Motor neuron (in vitro differentiated cells): ENCODE measurements at regions of chr7 and their contacts with region 1.

Region 1: GRCh38 chr7:26864309-26865093 is at the start of gene SKAP2:
- ATAC-seq: peak; percentile 89 to 95 (median 94)
- H3K4me3 ChIP-seq: peak within 1 kb of the TSS; percentile 57 to 72 (median 69)
- H3K27ac ChIP-seq: peak within 1 kb of the TSS; percentile 84 to 87
- H3K4me1 ChIP-seq: peaks cover 7 to 37% of the 10 kb centered on the region in 2 donors
- total RNA-seq, gene SKAP2: 34.0 to 91.7 (median 49.4) TPM

Region 2: DNA sequence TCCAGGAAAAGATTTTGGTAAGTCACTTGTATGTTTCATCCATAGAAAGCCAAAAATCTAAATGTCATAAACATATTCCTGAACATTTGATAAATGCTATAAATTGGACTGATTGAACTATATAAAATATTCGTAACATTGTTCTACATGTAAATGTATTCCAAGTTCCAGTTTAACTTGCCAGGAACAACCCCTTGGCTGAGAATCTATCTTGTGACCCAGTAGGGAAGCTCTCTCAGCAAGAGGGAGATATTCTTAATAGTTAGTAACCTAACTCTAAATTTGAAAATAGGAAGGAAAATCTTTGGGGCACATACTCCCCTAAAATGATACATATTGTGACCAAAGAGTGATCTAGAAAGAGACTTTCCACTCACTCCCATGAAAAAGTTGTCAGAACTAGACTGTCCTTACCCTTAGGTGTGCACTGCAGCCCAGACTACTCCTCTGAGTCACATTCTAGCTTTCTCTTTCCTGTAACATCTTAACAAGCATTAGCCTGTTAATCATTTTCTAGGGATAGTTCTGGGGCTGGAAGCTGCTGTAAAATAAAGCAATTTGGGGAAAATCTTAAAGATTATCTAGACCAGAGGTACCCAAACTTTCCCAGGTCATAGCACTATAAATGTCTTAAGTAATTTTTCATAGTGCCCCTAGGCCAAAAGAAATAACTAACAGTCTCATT is 73.6 kb after region 1 on chr7:
- in situ Hi-C with region 1: no loop called
- ATAC-seq: peak in 3 of 8 experiments; percentile 23 to 35 (median 31)
- H3K4me3 ChIP-seq: no peak overlapping the region
- H3K27ac ChIP-seq: no peak overlapping the region
- H3K4me1 ChIP-seq: no peaks in the 10 kb centered on the region

Region 3: GRCh38 chr7:27095897-27096767 is 231.6 kb after region 1 on chr7 and contains the start of gene HOXA1:
- in situ Hi-C with region 1: loop called in 5 of 9 experiments (anchors 10 to 25 kb)
- ATAC-seq: peak; percentile 66 to 81 (median 76)
- H3K4me3 ChIP-seq: peak within 1 kb of the TSS; percentile 51 to 82 (median 69)
- H3K27ac ChIP-seq: peak within 1 kb of the TSS; percentile 92 to 98
- H3K4me1 ChIP-seq: peaks cover 15 to 21% of the 10 kb centered on the region in 2 donors
- total RNA-seq, gene HOXA1: 2.7 to 44.5 (median 14.4) TPM

Region 4: GRCh38 chr7:27112955-27113949 is 248.8 kb after region 1 on chr7:
- in situ Hi-C with region 1: loop called in 1 of 9 experiments (anchors 25 kb)
- ATAC-seq: peak in 7 of 8 experiments; percentile 37 to 68 (median 50)
- H3K4me3 ChIP-seq: peak overlapping the region; percentile 61 to 87 (median 80)
- H3K27ac ChIP-seq: peak overlapping the region; percentile 92 to 94
- H3K4me1 ChIP-seq: peaks cover 14 to 26% of the 10 kb centered on the region in 2 donors